ENCODE measurements at regions of chr4 and their contacts with region 1.

Region 1: DNA sequence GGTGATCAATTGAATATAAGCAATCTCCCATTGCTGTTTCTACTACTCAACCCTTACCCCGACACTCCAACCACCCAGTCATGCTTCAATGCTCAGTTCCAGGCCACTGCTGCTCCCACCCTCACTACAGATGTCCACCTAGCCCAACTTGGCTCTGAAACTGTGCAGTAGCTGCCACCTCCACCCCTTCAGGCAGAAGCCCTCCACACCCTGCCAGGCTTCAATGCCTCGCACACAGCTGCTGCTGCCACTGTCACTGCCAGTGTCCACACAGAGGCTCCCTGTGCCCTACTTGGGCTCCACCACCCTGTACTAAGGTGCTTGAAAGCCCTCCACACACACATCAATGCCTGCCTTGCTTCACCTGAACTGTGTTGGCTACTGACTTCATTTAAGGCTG is 34.6 kb downstream of the LAMTOR3 start:
- DNase-seq: peak; percentile 63
- H3K4me3 ChIP-seq: peak overlapping the region; percentile 3
- H3K27ac ChIP-seq: peak overlapping the region; percentile 39
- H3K4me1 ChIP-seq: peaks cover 49% of the 10 kb centered on the region
- CTCF ChIP-seq: no peak

Region 2: GRCh38 chr4:99067617-99068016 is 792.0 kb before region 1 on chr4:
- CTCF ChIA-PET with region 1: no interaction called
- POLR2A ChIA-PET with region 1: no interaction called
- intact Hi-C with region 1: no loop called
- DNase-seq: no peak
- H3K4me3 ChIP-seq: no peak overlapping the region
- H3K27ac ChIP-seq: no peak overlapping the region
- H3K4me1 ChIP-seq: no peaks in the 10 kb centered on the region
- CTCF ChIP-seq: no peak

Region 3: DNA sequence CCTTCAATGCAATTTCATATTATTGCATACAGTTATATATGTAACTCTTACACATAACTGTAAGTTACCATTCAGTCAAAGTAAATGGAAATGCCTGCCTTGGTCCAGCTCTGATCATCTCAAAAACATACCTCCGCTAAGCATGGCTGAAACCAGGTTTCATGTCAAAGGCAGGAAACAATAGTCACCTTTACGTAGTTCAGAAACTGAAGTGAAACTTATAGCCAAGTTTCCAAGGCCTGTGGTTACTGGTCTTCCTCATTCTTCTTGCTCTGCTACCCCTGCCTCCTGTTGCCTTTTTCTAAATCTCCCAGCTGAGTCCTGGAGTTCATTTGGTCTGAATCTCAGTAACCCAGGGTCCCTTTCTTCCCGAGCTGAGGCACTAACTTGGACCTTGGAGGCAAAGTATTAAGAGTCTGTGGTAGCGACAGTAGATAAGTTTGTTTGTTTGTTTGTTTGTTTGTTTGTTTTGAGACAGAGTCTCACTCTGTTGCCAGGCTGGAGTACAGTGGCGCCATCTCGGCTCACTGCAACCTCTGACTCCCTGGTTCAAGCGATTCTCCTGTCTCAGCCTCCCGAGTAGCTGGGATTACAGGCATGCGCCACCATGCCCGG is 12.1 kb before region 1 on chr4:
- CTCF ChIA-PET with region 1: no interaction called
- POLR2A ChIA-PET with region 1: interaction called, 11 read pairs
- intact Hi-C with region 1: no loop called
- DNase-seq: peak; percentile 83
- H3K4me3 ChIP-seq: peak overlapping the region; percentile 40
- H3K27ac ChIP-seq: peak overlapping the region; percentile 75
- H3K4me1 ChIP-seq: peaks cover 49% of the 10 kb centered on the region
- CTCF ChIP-seq: no peak

Measured in OCI-LY7 (cell line).